Posterior vena cava (tissue), 2 donors: ENCODE measurements at regions of chr16 and their contacts with region 1.

Region 1: DNA sequence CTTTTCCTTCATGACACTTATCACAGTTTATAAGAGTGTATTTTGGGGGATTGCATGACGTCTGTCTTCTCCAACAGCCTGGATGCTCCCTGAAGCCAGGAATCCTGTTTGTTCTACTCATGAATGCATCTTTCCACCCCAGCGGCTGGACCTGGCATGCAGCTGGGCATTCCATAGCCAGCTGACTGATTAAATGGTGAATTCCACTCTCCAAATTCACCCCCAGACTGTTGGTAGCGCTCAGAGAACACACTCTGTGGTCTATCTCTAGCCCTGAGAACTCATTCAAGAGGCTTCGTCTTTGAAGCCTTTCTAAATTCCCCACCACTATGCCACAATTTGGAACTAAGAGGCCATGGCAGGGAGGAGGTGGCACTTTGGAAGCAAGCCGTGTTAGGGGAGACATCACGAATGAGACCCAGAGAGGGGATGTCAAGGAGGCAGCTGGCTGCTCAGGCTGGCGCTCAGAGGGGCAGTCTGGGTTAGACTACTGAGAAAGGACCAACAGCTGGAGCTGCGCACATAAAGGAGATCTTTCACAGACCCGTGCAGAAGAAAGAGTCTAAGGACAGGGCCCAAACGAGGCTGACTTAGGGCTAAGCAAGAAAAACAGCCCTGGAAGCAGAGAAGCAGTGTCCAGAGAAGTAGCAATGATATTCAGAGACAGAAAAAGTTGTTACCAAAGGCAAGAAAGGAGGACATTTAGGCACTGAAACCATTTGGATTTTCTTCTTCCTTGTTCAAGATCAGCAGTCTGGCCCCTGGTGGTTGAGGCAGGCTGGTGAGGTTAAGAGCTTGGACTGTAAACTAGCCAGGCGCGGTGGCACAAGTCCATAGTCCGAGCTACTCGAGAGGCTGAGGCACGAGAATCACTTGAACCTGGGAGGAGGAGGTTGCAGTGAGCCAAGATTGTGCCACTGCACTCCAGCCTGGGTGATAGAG is 42.4 kb upstream of the ZNF629 start:
- DNase-seq: no peak

Region 2: DNA sequence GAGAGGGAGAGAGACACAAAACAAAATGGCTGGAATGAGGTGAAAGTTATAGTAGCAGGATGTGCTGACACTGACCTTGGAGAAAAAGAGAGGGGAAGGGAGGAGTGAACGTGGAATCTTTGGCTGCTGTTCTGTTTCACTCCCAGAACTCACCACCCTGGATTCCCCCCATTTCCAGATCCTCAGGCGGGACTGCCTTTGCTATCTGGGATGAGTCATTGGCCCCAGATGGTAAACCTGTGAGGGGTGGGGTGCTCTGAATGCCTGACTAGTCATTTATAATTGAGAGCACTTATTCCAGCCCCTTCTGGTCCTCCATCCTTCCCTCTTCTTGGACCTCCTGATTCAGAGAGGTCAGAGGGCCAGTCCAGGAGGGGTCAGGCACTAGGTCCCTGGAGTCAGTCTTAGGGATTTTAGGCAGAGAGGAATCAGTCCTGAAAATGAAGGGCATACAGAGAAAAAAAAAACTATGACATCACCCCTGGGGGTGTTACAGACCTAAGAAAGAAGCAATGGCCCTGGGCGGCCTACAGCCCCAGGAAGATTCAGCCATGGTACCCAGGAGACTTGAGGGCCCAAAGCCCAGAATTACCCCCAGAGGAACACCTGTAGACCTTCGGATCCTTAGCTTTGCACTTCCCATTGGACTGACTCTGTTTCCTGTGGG is 1053.5 kb before region 1 on chr16:
- intact Hi-C with region 1: loop called in 1 of 2 experiments (anchors 10 kb)
- DNase-seq: no peak

Region 3: DNA sequence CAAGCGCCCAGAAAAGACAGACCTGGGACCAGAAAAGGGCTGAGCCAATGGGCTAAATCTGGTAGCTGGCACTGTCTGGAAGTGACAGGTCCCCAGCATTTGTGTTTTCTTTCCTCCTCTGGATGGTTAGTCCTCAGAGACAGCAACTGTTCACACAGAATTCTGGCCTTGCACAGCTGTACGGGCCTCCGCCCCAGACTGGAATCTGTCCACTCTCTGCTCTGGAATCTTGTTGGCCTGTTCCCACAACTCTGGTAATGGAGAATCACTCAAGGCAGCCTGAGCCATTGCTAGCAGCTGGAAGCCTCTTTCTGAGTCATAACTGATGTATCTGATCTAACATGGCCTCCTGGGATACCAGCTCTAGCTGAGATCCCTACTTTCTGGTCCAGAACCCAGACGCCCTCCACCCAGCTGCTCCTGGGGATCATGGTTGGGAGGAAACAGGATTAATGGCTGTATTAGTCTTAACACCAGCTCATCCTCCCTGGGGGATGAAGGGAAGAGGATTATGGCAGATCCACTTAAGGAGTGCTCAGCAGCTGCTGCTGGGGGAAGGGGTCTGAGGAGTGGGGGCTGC is 235.6 kb after region 1 on chr16:
- intact Hi-C with region 1: no loop called
- DNase-seq: no peak